ENCODE measurements at regions of chr9 and their contacts with region 1.

Region 1: GRCh38 chr9:20805766-20806165 is 121.7 kb downstream of the FOCAD start:
- DNase-seq: no peak
- ATAC-seq: no peak
- H3K4me3 Mint-ChIP-seq: no peak overlapping the region
- H3K27ac Mint-ChIP-seq: no peak overlapping the region
- H3K4me1 Mint-ChIP-seq: no peaks in the 10 kb centered on the region
- H3K27me3 Mint-ChIP-seq: no peaks in the 10 kb centered on the region

Region 2: DNA sequence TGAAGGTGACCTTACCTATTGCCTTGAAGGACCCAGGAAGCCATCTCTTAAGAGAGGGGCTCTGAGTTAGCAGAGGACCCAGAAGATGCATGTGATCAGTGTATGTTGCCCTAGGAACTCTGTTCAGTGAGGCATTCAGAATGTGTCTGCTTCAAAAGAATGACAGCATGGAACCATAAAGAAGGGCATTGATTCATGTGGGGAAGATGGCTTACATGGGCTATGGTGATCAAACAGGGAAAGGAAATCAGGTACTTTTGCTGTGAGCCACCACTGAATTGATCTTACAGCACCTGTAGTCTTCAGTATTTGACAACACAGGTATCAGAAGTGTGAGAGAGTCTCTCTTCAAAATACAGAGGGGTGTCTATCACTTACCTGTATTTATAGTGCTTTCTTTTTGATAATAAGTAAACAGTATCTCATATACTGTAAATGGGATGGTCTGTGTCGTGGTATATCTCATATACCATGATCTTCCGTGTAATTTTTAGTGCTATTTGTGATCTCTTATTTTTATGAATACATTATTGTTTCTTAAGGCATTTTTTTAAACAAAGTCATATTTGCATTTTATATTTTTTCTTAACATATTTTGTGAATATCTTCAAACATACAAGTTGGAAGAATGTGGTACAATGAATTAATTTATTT is 64.7 kb before region 1 on chr9:
- CTCF ChIA-PET with region 1: no interaction called
- POLR2A ChIA-PET with region 1: no interaction called
- intact Hi-C with region 1: no loop called
- DNase-seq: no peak
- ATAC-seq: peak; percentile 16
- H3K4me3 Mint-ChIP-seq: no peak overlapping the region
- H3K27ac Mint-ChIP-seq: no peak overlapping the region
- H3K4me1 Mint-ChIP-seq: peaks cover 12% of the 10 kb centered on the region
- H3K27me3 Mint-ChIP-seq: no peaks in the 10 kb centered on the region

Region 3: DNA sequence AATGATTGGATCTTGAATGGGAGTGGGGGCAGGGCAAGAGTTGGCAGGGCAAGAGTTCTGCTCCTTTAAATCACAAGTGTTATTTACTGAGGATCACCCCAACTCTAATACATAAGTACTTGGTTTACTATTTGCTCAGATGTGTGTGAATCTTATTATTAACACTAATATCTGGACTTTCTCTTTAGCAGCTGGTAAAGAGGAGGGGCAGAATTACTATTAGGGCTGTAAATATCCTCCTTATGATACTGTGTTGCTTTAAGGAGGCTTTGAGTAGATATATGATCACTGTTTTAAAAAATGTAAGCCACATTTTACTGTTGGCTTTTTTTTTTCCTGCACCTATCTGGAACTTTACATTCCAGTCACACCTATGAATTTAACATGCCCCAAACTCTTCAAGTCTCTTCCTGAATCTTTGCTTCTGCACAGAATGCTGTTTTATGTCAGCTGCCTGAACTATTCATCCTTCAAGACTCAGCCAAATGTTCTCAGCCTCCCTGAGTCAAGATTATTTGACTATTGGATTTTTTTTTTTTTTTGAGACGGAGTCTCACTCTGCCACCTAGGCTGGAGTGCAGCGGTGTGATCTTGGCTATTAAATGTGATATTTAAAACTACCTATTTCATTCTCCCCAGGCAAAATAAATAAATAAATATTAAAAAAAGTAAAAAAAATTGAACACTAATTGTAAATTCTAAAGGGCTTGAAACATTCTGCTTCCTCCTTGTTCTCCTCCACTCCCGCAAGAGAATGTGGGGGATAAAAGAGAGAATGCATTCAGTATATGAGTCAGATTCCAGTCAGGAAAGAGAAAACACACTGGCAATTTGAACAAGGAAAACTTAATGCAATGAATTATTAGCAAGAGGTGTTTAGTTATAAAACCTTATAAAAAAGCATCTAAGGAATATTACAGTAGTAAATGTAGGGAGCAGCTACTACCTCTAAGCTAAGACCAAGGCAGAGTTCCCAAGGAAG is 22.4 kb before region 1 on chr9:
- CTCF ChIA-PET with region 1: interaction called, 4 read pairs
- POLR2A ChIA-PET with region 1: no interaction called
- intact Hi-C with region 1: loop called in 1 of 2 experiments (anchors 2 kb)
- DNase-seq: no peak
- ATAC-seq: no peak
- H3K4me3 Mint-ChIP-seq: no peak overlapping the region
- H3K27ac Mint-ChIP-seq: no peak overlapping the region
- H3K4me1 Mint-ChIP-seq: no peaks in the 10 kb centered on the region
- H3K27me3 Mint-ChIP-seq: no peaks in the 10 kb centered on the region

Region 4: GRCh38 chr9:20854444-20854843 is 48.7 kb after region 1 on chr9:
- CTCF ChIA-PET with region 1: no interaction called
- POLR2A ChIA-PET with region 1: no interaction called
- intact Hi-C with region 1: loop called in 1 of 2 experiments (anchors 5 kb)
- DNase-seq: no peak
- ATAC-seq: no peak
- H3K4me3 Mint-ChIP-seq: no peak overlapping the region
- H3K27ac Mint-ChIP-seq: no peak overlapping the region
- H3K4me1 Mint-ChIP-seq: no peaks in the 10 kb centered on the region
- H3K27me3 Mint-ChIP-seq: no peaks in the 10 kb centered on the region

Region 5: GRCh38 chr9:20929276-20929675 is 123.5 kb after region 1 on chr9:
- CTCF ChIA-PET with region 1: no interaction called
- POLR2A ChIA-PET with region 1: no interaction called
- intact Hi-C with region 1: no loop called
- DNase-seq: no peak
- ATAC-seq: no peak
- H3K4me3 Mint-ChIP-seq: no peak overlapping the region
- H3K27ac Mint-ChIP-seq: no peak overlapping the region
- H3K4me1 Mint-ChIP-seq: peaks cover 17% of the 10 kb centered on the region
- H3K27me3 Mint-ChIP-seq: no peaks in the 10 kb centered on the region

Measured in activated CD4-positive, alpha-beta T cell treated with anti-CD3 and anti-CD28 coated beads for 36 hours (primary cell).